Heart left ventricle (tissue), 16 donors: ENCODE measurements at regions of chr12 and their contacts with region 1.

Region 1: GRCh38 chr12:11067514-11067913 is 5.4 kb upstream of the TAS2R46 start:
- DNase-seq: peak in 4 of 5 donors; percentile 40 to 73 (median 59)
- ATAC-seq: peak in 3 of 4 donors; percentile 79 to 94 (median 79)
- H3K4me3 ChIP-seq: no peak overlapping the region
- H3K27ac ChIP-seq: no peak overlapping the region
- H3K4me1 ChIP-seq: peaks cover 0 to 18% (median 0%) of the 10 kb centered on the region in 12 donors
- H3K27me3 ChIP-seq: no peaks in the 10 kb centered on the region
- CTCF ChIP-seq: no peak
- POLR2A ChIP-seq: no peak

Region 2: GRCh38 chr12:11015775-11016430 is 51.6 kb before region 1 on chr12:
- intact Hi-C with region 1: loop called in 6 of 10 experiments (anchors 2 to 5 kb)
- DNase-seq: no peak
- ATAC-seq: no peak
- H3K4me3 ChIP-seq: no peak overlapping the region
- H3K27ac ChIP-seq: no peak overlapping the region
- H3K4me1 ChIP-seq: peaks cover 0 to 4% (median 0%) of the 10 kb centered on the region in 12 donors
- H3K27me3 ChIP-seq: no peaks in the 10 kb centered on the region
- CTCF ChIP-seq: no peak
- POLR2A ChIP-seq: no peak

Region 3: DNA sequence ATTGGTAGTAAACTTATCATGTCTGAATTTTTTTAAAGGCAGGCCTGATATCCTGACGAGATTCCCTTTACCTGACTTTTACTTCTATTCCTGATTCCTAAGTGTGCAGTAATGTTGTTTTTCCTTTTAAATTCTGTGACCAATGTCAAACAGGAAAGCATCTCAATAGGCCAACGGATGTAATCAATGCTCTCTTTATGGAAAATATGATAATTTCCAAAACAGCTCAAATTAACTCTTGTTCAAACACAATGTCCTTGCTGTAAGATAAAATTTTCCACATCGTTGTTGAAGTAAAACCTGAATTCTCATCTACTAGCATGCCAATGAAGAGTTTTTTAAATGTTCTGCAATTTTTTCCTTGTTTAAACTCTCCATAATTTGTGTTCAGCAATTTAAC is 28.3 kb before region 1 on chr12:
- intact Hi-C with region 1: loop called in 2 of 10 experiments (anchors 1 to 2 kb)
- DNase-seq: no peak
- ATAC-seq: no peak
- H3K4me3 ChIP-seq: no peak overlapping the region
- H3K27ac ChIP-seq: no peak overlapping the region
- H3K4me1 ChIP-seq: peaks cover 0 to 4% (median 0%) of the 10 kb centered on the region in 12 donors
- H3K27me3 ChIP-seq: no peaks in the 10 kb centered on the region
- CTCF ChIP-seq: no peak
- POLR2A ChIP-seq: no peak

Region 4: GRCh38 chr12:11171145-11171968 is 103.8 kb after region 1 on chr12 and contains the start of gene SMIM10L1:
- intact Hi-C with region 1: loop called in 1 of 10 experiments (anchors 10 kb)
- DNase-seq: peak; percentile 94 to 96 (median 95)
- ATAC-seq: peak; percentile 99 to 100 (median 100)
- H3K4me3 ChIP-seq: peak within 1 kb of the TSS; percentile 44 to 97 (median 84)
- H3K27ac ChIP-seq: peak within 1 kb of the TSS; percentile 93 to 99 (median 98)
- H3K4me1 ChIP-seq: peaks cover 0 to 45% (median 34%) of the 10 kb centered on the region in 12 donors
- H3K27me3 ChIP-seq: no peaks in the 10 kb centered on the region
- CTCF ChIP-seq: peak in 1 of 12 donors; percentile 7
- POLR2A ChIP-seq: peak in 1 of 2 donors; percentile 71
- total RNA-seq, gene SMIM10L1: 13.0 to 24.5 (median 16.9) TPM